ENCODE measurements at regions of chr10 and their contacts with region 1.

Region 1: GRCh38 chr10:68082872-68083271 is 7.8 kb upstream of the HERC4 start:
- H3K4me3 Mint-ChIP-seq: no peak overlapping the region
- H3K27ac Mint-ChIP-seq: no peak overlapping the region
- H3K4me1 Mint-ChIP-seq: no peaks in the 10 kb centered on the region
- H3K27me3 Mint-ChIP-seq: no peaks in the 10 kb centered on the region

Region 2: GRCh38 chr10:68032113-68032512 is 50.8 kb before region 1 on chr10:
- intact Hi-C with region 1: no loop called
- H3K4me3 Mint-ChIP-seq: no peak overlapping the region
- H3K27ac Mint-ChIP-seq: no peak overlapping the region
- H3K4me1 Mint-ChIP-seq: peaks cover 17% of the 10 kb centered on the region
- H3K27me3 Mint-ChIP-seq: no peaks in the 10 kb centered on the region

Region 3: GRCh38 chr10:68156373-68157185 is 73.7 kb after region 1 on chr10:
- intact Hi-C with region 1: loop called (anchors 5 kb)
- H3K4me3 Mint-ChIP-seq: no peak overlapping the region
- H3K27ac Mint-ChIP-seq: no peak overlapping the region
- H3K4me1 Mint-ChIP-seq: no peaks in the 10 kb centered on the region
- H3K27me3 Mint-ChIP-seq: no peaks in the 10 kb centered on the region

Region 4: DNA sequence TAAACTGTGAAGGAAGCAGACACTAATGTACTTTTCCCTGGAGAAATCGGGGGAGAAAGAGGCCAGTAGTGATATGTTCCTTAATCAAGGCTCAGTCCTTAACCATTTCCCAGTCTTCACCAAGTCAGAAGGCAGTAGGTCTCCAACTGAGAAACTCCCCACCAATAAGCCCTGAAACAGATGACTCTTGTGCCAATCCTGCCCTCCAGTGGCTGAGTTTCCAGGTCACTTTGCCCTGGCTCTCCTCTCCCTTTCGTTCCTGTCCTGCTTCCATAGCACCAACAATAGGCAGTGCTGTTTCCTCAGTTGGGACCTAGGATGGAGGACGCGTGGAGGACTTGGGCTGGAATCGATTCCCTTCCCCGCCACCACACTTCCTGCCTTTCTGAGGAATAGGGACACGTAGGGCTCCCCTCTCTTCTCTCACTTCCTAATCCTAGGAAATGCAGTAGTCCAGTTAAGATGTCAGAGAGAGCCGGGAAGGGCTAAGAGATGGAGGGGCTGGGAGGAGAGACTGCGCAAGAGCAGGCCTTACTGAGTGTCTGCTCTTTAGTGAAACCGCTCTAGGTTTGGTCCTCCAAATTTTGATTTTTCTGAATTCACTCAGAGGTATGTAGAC is 125.7 kb after region 1 on chr10:
- intact Hi-C with region 1: no loop called
- H3K4me3 Mint-ChIP-seq: no peak overlapping the region
- H3K27ac Mint-ChIP-seq: no peak overlapping the region
- H3K4me1 Mint-ChIP-seq: no peaks in the 10 kb centered on the region
- H3K27me3 Mint-ChIP-seq: peaks cover 4% of the 10 kb centered on the region

Measured in dendritic cell treated with granulocyte-macrophage colony-stimulating factor and Interleukin-4, amounts not matched to agents 40 ng/mL and 50 ng/mL, for 4 days (primary cell).